ENCODE measurements at regions of chr15 and their contacts with region 1.

Region 1: GRCh38 chr15:77821188-77821958 is 188.7 kb upstream of the LINGO1 start:
- DNase-seq: peak; percentile 68
- H3K27ac ChIP-seq: no peak overlapping the region
- CTCF ChIP-seq: peak; percentile 91

Region 2: DNA sequence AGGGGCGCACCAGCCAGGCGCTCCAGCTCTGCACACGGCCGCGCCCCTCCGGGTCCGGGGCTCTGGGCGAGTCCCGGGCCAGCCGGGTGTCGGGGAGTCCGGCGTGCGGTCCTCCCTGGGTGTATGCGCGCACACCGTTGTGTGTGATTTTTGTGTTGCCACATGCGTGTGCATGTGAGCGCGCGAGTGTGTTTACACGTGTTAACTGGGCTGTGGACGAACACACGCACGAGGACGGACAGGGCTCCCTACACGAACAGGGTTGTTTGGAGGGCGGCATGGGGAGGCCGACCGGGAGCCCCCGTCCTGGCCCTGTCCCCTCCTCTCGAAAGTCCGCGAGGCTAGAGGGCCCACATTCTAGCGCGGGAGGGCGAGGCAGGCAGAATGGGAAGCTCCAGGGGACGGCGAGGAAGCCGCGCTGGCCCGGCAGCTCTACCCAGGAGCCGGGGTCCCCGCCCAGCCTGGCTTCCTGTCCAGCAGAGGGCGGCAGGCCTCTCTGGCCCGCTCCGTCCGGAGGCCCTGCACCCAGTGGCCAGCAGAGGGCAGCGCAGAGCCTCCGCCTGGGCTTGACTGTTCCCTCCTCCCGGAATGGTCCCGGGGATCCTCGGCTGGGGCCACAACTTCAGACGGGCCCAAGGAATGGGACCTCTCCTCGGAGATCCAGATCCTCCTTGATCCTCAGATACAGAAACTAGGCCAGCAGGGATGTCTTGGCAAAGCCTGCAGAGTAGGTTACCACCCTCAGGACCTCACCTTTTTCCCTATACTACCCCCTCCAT is 188.1 kb before region 1 on chr15:
- CTCF ChIA-PET with region 1: interaction called, 67 read pairs
- POLR2A ChIA-PET with region 1: no interaction called
- DNase-seq: peak; percentile 90
- H3K27ac ChIP-seq: no peak overlapping the region
- CTCF ChIP-seq: peak; percentile 100

Region 3: DNA sequence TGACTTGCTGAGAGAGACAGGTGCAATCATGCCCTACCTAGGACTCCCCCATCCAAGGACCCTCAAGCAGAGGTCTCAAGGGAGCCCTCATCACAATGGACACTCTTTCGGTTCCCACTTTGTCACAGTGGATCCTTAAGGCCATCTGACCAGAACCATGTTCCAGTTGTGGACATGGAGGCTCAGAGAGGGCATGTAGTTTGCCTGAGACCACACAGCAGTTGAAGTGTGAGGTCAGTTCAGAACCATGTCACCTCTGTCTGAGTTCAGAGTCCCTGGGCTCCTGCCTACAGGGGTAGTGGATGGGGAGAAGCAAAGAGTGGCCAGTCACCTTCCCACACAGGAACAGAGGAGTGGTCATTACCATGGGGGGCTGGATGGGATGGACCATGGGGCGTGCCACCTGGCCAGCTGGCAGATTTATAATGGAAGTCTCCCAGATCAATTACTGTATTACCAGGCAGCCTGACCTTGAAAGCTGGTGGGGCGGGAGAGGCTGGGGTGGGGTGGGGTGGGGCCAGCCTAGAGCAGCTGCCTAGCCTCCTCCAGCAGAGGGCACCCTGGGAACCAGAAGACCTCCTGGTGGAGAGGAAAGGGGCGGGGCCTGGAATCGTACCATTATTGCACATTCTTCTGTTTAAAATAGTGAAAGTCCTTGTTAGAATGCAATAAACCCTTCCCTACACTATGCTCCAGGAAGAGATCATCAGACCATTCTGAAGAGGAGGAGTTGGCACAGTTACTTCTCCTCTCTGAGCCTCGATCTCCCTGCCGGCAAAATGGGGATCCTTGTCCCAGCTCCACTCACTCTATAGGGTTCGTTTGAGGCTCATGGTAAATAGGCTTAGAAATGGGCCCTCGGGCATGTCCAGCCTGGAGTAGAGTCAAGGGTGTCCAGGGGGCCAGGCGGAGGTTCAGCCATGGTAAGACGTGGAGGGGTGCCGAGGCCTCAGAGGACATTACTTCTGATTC is 161.7 kb before region 1 on chr15:
- CTCF ChIA-PET with region 1: interaction called, 22 read pairs
- POLR2A ChIA-PET with region 1: no interaction called
- DNase-seq: peak; percentile 74
- H3K27ac ChIP-seq: no peak overlapping the region
- CTCF ChIP-seq: no peak; the same call in 1 of the 2 replicates

Region 4: DNA sequence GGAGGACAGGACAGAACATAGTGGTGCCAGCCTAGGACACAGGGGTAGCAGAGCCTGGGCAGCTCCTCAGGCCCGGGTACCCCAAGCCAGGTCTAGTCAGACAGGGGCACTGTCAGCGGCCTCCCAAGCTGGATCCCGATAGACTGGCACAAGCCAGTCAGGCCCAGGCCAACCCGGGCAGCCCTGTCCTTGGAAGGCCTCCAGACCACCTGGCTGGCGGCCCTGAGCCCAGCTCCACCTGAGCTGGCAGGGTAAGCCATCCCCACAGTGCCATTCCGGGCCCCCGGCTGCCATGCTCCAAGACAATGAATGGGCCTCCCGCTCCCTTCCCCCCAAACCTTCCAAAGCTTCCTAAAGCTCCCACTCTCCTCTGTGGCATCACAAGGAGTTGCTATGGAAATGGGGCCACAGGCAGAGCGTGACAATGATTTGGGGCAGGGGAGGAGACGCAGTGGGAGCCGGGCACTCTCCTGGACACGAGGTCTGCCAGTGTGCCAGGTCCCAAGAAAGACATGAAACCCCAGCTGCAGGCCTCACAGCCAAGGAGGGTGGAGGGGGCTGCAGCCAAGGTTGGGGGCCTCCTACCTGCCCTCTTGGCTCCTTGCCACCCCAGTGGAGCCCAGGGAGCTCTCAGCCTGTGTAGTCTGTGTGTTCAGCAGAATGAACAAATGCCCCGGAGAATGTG is 23.1 kb before region 1 on chr15:
- CTCF ChIA-PET with region 1: interaction called, 10 read pairs
- POLR2A ChIA-PET with region 1: no interaction called
- DNase-seq: no peak
- H3K27ac ChIP-seq: no peak overlapping the region
- CTCF ChIP-seq: no peak

Region 5: DNA sequence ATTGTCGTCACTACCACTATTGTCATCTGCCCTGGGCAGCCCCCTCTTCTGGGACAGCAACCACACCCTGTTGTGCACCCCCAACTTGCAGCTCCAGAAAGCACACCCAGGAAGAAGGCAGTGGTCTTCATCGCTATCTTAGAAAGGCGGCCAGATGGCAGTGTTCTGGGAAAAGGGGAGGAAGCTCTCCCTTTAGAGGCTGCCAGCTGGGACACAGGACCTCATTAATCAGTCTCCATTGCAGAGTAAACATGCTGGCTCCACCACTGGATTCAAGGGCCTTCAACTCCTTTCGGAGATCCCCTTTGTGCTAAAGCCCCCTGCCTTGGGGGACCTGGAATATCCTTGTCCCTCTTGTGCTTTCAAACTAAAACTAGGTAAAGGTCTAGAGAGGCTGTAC is 10.6 kb after region 1 on chr15:
- CTCF ChIA-PET with region 1: interaction called, 18 read pairs
- POLR2A ChIA-PET with region 1: no interaction called
- DNase-seq: no peak
- H3K27ac ChIP-seq: no peak overlapping the region
- CTCF ChIP-seq: no peak

Measured in RWPE1 (cell line).